Natural killer cell (primary cell): ENCODE measurements at regions of chr1 and their contacts with region 1.

Region 1: GRCh38 chr1:63214553-63214952 is 107.8 kb upstream of the FOXD3 start:
- DNase-seq: no peak
- ATAC-seq: no peak
- H3K4me3 ChIP-seq: no peak overlapping the region
- H3K4me3 Mint-ChIP-seq: no peak overlapping the region
- H3K27ac ChIP-seq: no peak overlapping the region
- H3K27ac Mint-ChIP-seq: no peak overlapping the region
- H3K4me1 ChIP-seq: no peaks in the 10 kb centered on the region
- H3K4me1 Mint-ChIP-seq: no peaks in the 10 kb centered on the region
- H3K27me3 ChIP-seq: no peaks in the 10 kb centered on the region
- H3K27me3 Mint-ChIP-seq: peaks cover 0 to 3% of the 10 kb centered on the region in 2 donors
- CTCF ChIP-seq: no peak

Region 2: GRCh38 chr1:63200676-63201075 is 13.9 kb before region 1 on chr1:
- intact Hi-C with region 1: loop called (anchors 1 kb)
- DNase-seq: no peak
- ATAC-seq: no peak
- H3K4me3 ChIP-seq: no peak overlapping the region
- H3K4me3 Mint-ChIP-seq: no peak overlapping the region
- H3K27ac ChIP-seq: no peak overlapping the region
- H3K27ac Mint-ChIP-seq: no peak overlapping the region
- H3K4me1 ChIP-seq: no peaks in the 10 kb centered on the region
- H3K4me1 Mint-ChIP-seq: no peaks in the 10 kb centered on the region
- H3K27me3 ChIP-seq: no peaks in the 10 kb centered on the region
- H3K27me3 Mint-ChIP-seq: peaks cover 11 to 31% of the 10 kb centered on the region in 2 donors
- CTCF ChIP-seq: no peak